Activated naive CD4-positive, alpha-beta T cell treated with anti-CD3 and anti-CD28 coated beads, Interleukin-2, amount 10 ng/mL, durations not matched to agents 7 days and 5 days (primary cell): ENCODE measurements at regions of chr11 and their contacts with region 1.

Region 1: GRCh38 chr11:57335343-57336110 is at the start of gene SSRP1:
- DNase-seq: peak; percentile 91
- H3K4me3 Mint-ChIP-seq: peak within 1 kb of the TSS; percentile 90
- H3K27ac Mint-ChIP-seq: peak within 1 kb of the TSS; percentile 98
- H3K4me1 Mint-ChIP-seq: peaks cover 41% of the 10 kb centered on the region
- H3K27me3 Mint-ChIP-seq: peaks cover 28% of the 10 kb centered on the region

Region 2: DNA sequence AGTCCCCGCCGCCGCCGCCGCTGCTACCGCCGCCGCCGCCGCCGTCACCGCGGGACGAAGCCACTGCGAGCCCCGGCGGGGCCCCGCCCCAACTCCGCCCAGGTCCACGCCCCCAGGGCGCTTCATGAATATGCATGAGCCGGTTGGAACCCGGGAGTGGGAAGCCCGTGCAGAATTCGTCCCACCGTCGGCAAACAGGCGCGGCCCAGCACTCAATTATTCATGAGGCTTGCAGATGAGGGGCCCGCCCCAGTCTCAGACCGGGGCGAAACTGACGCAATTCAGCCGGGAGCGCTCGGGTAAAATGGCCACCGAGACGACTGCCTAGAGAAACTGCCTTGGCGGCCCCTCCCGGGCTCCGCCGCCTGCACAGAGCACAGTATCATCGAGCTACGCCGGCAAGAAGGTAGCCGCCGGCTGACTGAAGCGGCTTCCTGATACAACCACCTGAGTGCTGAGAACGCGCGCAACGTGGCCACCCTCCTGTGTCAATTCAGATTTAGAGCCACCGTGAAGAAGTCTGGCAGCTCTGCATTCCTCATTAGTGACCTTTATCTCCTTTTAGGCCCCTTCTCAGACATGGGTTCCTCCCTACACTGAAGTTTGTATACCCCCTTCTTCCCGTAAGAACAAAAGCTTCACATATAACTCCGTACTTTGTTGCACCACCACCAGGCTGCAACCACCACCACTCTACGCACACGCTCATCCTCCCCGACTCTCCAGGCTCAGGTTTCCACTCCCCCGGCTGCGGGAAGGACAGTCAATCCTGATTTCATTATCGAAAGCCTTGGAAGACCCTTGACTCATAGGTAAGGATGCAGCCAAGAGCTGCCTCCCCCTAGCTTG is 10.4 kb before region 1 on chr11 and contains the start of gene TNKS1BP1:
- CTCF ChIA-PET with region 1: interaction called, 23 read pairs
- DNase-seq: peak; percentile 94
- H3K4me3 Mint-ChIP-seq: peak within 1 kb of the TSS; percentile 81
- H3K27ac Mint-ChIP-seq: peak within 1 kb of the TSS; percentile 92
- H3K4me1 Mint-ChIP-seq: peaks cover 51% of the 10 kb centered on the region
- H3K27me3 Mint-ChIP-seq: peaks cover 4% of the 10 kb centered on the region